ENCODE measurements at regions of chr9 and their contacts with region 1.

Region 1: GRCh38 chr9:22158927-22159346 is 149.8 kb upstream of the CDKN2B start:
- DNase-seq: no peak
- ATAC-seq: no peak
- H3K4me3 Mint-ChIP-seq: no peak overlapping the region
- H3K27ac Mint-ChIP-seq: no peak overlapping the region
- H3K4me1 Mint-ChIP-seq: peaks cover 20% of the 10 kb centered on the region
- H3K27me3 Mint-ChIP-seq: no peaks in the 10 kb centered on the region
- CTCF ChIP-seq: no peak

Region 2: GRCh38 chr9:22052376-22052945 is 106.5 kb before region 1 on chr9:
- CTCF ChIA-PET with region 1: no interaction called
- POLR2A ChIA-PET with region 1: no interaction called
- intact Hi-C with region 1: loop called (anchors 5 kb)
- DNase-seq: no peak
- ATAC-seq: no peak
- H3K4me3 Mint-ChIP-seq: no peak overlapping the region
- H3K27ac Mint-ChIP-seq: no peak overlapping the region
- H3K4me1 Mint-ChIP-seq: peaks cover 32% of the 10 kb centered on the region
- H3K27me3 Mint-ChIP-seq: no peaks in the 10 kb centered on the region
- CTCF ChIP-seq: no peak